Dorsolateral prefrontal cortex (tissue), 120 donors: ENCODE measurements at regions of chr18 and their contacts with region 1.

Region 1: GRCh38 chr18:62531078-62531477 is 8.3 kb downstream of the ZCCHC2 start:
- DNase-seq: no peak
- H3K4me3 ChIP-seq: no peak overlapping the region
- H3K27ac ChIP-seq: peak overlapping the region in 30 of 59 donors; percentile 1 to 71 (median 30)
- H3K27me3 ChIP-seq: no peaks in the 10 kb centered on the region
- CTCF ChIP-seq: no peak

Region 2: GRCh38 chr18:62118328-62118727 is 412.8 kb before region 1 on chr18:
- intact Hi-C with region 1: no loop called
- DNase-seq: no peak
- H3K4me3 ChIP-seq: no peak overlapping the region
- H3K27ac ChIP-seq: no peak overlapping the region
- H3K27me3 ChIP-seq: no peaks in the 10 kb centered on the region
- CTCF ChIP-seq: no peak

Region 3: DNA sequence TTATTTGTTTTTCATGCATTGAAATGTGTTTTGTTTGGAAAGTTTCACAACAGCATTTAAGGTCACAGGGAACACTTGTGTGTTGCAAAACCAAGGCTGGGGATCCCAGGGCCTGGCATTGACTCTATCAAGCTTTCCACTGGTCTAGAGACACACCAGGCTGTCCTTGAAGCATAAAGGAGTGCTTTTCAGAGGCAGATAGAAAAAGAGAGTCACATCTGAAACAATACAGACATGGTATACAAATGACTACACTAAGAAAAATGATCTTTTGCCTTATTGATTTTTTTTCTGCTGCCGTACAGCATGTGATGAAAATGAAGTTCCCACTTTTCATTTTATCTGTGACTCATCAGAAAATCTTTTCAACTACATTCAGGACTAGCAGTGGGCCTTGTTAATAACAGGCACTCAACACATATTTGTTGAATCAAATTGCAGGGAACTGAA is 70.2 kb before region 1 on chr18:
- intact Hi-C with region 1: no loop called
- DNase-seq: no peak
- H3K4me3 ChIP-seq: no peak overlapping the region
- H3K27ac ChIP-seq: no peak overlapping the region
- H3K27me3 ChIP-seq: no peaks in the 10 kb centered on the region
- CTCF ChIP-seq: no peak

Region 4: DNA sequence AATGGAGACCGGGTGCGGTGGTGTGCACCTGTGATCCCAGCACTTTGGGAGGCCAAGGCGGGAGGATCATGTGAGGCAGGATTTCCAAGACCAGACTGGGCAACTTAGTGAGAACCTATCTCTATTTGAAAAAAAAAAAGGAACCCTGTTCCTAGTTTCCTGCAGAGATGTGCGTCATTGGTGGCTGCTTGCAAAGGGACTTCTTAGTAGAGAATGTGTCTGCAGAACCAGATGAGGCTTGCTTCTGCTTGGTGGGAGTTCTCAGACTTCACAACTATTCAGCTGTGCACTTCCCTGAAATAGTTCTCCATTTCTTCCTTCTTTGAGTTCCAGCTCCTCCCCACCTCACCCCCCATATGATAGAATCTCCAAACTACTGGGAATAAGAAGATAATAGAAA is 14.0 kb after region 1 on chr18:
- intact Hi-C with region 1: loop called in 1 of 2 experiments (anchors 2 kb)
- DNase-seq: no peak
- H3K4me3 ChIP-seq: no peak overlapping the region
- H3K27ac ChIP-seq: no peak overlapping the region
- H3K27me3 ChIP-seq: no peaks in the 10 kb centered on the region
- CTCF ChIP-seq: no peak